Right lobe of liver (tissue), 6 donors: ENCODE measurements at regions of chr19 and their contacts with region 1.

Region 1: DNA sequence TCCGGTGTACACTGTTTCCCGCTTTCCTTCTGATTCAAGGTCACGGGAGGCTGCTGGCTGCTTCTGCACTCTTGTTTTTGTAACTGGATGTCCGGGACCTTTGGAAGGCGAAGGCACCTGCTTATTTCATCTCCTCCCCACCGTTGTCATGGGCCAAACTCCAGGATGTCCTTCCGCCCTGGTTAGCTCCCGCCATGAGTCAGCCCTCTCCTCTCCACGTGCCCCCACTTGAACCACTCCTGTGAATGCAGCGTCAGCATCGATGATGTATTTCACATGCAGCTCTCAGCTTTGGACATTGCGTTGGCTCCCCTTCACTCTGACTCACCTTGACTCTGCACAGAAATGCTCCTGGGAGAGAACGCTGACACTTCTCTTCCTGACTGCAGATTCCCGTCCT is 5.5 kb upstream of the GALP start:
- DNase-seq: no peak
- ATAC-seq: peak in 3 of 4 donors; percentile 5 to 58 (median 43)
- H3K4me3 ChIP-seq: no peak overlapping the region
- H3K27ac ChIP-seq: no peak overlapping the region
- H3K4me1 ChIP-seq: peaks cover 0 to 4% (median 1%) of the 10 kb centered on the region in 4 donors
- H3K27me3 ChIP-seq: no peaks in the 10 kb centered on the region
- CTCF ChIP-seq: no peak
- POLR2A ChIP-seq: no peak

Region 2: DNA sequence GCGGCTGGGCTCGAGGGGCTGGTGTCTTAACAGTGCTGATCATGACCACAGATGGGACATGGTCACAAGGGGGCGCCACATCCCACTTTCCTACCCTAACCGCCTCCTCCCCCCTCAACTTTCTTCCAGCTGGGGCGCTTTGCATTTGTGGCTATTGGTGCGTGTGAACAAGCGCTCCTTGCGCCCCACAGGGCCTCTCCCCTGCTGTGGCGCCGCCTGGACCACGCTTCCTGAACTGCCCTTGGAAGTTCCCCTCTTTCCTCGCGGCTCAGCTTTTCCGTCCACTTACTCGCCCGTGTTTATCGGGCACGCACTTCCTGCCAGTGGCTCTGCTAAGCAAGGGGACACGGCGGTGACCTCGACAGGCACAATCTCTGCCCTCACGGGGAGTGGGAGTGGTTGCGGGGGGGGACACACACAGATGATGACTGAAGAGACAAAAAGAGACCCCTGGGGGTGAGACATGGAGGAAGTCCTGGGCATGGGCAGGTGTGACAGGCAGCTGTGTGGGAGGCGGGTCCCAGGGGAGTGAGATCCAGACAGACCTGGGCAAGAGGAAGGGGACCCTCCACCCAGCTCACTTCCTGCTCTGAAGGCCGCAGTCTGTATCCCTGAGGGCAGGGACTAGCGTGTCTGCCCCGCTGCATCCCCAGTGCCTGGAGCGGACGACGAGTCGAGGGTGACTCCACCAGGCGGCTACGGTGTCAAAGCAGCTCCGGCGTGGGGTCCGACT is 89.4 kb before region 1 on chr19:
- intact Hi-C with region 1: loop called in 1 of 2 experiments (anchors 10 kb)
- DNase-seq: peak; percentile 77 to 79 (median 78)
- ATAC-seq: peak; percentile 81 to 84 (median 82)
- H3K4me3 ChIP-seq: peak overlapping the region; percentile 23 to 42 (median 30)
- H3K27ac ChIP-seq: no peak overlapping the region
- H3K4me1 ChIP-seq: peaks cover 0 to 9% (median 0%) of the 10 kb centered on the region in 4 donors
- H3K27me3 ChIP-seq: no peaks in the 10 kb centered on the region
- CTCF ChIP-seq: peak; percentile 44 to 50 (median 48)
- POLR2A ChIP-seq: no peak

Region 3: DNA sequence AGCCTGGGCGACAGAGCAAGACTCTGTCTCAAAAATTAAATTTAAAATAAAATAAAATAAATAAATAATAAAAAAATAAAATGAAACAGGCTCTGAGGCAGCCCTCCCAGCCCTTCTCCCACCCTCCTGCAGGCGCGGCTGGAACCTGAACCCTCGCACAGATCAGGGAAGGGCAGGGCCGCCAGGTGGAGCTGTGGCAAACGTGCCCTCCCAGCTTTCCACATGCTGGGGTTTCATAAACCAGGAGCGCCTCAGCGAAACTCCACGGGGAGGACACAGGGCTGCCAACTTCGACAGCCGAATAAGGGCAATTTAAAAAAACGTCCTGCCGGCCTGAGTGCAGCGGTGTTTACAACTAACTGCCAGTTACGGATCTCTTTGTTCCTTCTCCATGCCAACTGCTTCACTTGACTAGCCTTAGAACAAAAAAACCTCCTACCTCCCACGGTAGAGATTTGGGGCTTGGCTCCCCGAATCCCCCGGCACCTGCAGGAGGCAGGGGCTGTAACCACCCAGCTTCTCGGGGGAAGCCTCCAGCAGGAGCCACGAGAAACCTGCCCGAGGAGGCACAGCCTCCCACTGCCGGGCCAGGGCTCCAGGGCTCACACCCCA is 65.1 kb before region 1 on chr19:
- intact Hi-C with region 1: loop called (anchors 10 kb)
- DNase-seq: peak; percentile 83 to 91 (median 89)
- ATAC-seq: peak; percentile 90 to 97 (median 92)
- H3K4me3 ChIP-seq: no peak overlapping the region
- H3K27ac ChIP-seq: peak overlapping the region in 2 of 3 donors; percentile 76 to 90
- H3K4me1 ChIP-seq: peaks cover 0 to 43% (median 23%) of the 10 kb centered on the region in 4 donors
- H3K27me3 ChIP-seq: no peaks in the 10 kb centered on the region
- CTCF ChIP-seq: peak; percentile 77 to 89 (median 83)
- POLR2A ChIP-seq: no peak

Region 4: GRCh38 chr19:56120371-56121179 is 49.7 kb before region 1 on chr19:
- intact Hi-C with region 1: no loop called
- DNase-seq: peak; percentile 95 to 96 (median 95)
- ATAC-seq: peak; percentile 70 to 75 (median 72)
- H3K4me3 ChIP-seq: peak overlapping the region; percentile 71 to 91 (median 88)
- H3K27ac ChIP-seq: peak overlapping the region; percentile 76 to 93 (median 92)
- H3K4me1 ChIP-seq: peaks cover 0 to 31% (median 17%) of the 10 kb centered on the region in 4 donors
- H3K27me3 ChIP-seq: no peaks in the 10 kb centered on the region
- CTCF ChIP-seq: peak; percentile 5 to 35 (median 23)
- POLR2A ChIP-seq: peak; percentile 86